GM13976 (cell line): ENCODE measurements at regions of chr3 and their contacts with region 1.

Region 1: DNA sequence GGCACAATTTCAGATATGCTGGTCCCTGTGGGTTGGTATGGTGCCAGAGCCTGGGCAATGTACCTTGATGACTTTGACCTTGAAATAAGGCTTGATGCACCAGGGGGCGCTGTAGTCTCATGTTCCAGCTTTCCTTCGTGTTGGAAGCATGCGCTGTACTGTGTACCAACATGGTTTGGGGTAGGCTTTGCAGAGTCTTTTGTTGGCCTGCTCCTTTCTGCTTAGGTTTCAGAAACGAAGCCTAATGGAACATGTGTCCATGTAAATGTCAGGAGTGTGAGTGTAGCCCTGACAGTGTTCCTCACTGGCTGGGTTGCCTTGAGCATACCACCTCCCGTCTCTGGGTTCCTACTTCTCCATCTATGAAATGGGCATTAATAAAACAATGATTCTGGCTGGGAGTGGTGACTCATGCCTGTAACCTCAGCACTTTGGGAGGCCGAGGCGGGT is 3.6 kb upstream of the CCR4 start:
- DNase-seq: peak; percentile 64
- CTCF ChIP-seq: peak; percentile 70

Region 2: DNA sequence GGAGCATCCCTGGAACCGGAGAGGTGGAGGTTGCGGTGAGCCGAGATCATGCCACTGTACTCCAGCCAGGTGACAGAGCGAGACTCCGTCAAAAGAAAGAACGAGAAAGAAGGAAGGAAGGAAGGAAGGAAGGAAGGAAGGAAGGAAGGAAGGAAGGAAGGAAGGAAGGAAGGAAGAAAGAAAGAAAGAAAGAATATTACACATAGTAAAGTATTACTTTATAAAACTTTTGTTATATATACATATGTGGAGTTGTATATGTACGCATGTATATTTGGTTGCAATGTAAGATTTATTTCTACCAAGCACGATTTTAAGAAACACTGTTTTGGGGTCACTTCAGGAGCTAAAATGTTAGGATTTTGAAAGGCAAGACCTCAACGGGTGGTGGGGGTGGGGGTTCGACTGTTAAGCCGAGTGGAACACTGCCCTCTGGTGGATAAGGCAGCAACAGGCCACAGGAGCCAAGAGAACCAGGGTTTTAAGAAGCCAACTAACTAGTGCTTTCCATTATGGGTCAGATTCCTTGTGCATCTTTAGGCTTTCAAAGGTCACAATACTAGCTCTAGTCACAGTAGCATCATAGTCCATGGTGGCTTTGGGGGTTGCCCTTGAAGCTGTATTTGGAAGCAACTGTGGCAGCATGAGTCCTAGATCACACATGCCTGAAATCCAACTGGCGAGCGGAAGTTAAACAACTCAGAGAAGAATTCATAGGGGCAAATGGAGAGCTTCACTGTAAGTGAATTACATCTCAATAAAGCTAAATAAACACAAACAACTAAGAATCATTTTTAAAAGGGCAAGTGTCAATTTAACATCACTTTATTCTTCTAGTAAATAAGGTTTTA is 126.6 kb after region 1 on chr3:
- in situ Hi-C with region 1: loop called (anchors 5 kb)
- DNase-seq: peak; percentile 78
- CTCF ChIP-seq: peak; percentile 84

Region 3: DNA sequence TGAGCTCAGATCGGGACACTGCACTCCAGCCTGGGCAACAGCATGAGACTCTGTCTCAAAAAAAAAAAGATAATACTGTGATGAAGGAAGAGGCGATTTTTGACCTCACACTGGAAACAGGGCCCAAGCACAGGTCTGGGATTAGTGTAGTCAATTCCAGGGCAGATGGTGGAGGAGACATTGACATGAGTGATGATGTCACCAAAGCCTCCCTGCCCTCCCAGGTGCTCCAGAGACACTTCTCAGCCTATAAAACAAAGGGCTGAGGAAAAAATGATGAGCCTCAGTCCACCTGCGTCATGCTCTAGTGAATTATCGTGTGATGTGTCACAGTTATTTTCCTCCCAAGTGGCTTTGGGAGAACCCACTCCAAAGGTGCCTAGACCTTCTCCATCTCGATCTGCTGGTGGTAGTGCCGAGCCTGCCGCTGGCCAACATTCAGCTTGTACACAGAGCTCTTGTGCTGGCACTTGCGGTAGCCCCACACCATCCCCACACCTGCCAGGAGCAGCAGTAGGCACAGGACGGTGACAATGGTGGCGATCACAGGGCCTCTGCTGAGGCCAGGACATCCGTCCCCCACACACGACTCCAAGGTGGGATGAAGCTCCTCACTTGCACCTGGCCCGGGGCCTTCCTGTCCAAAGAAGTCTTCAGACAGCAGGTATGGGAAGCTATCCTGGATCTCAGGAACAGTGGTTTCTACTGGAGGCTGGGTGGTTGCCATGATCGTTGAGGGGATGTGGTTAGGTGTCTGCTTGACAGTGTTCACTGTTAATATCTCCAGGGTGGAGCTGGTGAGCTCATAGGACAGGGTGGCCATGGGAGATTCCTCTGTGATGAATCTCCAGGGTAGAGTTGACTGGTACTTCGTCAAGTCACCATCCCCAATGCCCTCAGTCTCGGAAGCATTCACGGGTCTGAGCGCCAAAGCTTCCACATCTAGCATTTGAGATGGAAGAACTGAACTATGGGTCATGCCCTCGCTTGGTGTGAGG is 204.8 kb after region 1 on chr3:
- in situ Hi-C with region 1: no loop called
- DNase-seq: no peak
- CTCF ChIP-seq: no peak